ENCODE measurements at regions of chr6 and their contacts with region 1.

Region 1: GRCh38 chr6:32947552-32948465 is 5.1 kb downstream of the HLA-DMA start:
- DNase-seq: peak; percentile 67
- ATAC-seq: peak; percentile 93
- H3K4me3 ChIP-seq: no peak overlapping the region
- H3K27ac ChIP-seq: no peak overlapping the region
- H3K4me1 ChIP-seq: no peaks in the 10 kb centered on the region
- H3K27me3 ChIP-seq: no peaks in the 10 kb centered on the region
- CTCF ChIP-seq: peak; percentile 84

Region 2: GRCh38 chr6:32402812-32403211 is 545.0 kb before region 1 on chr6:
- CTCF ChIA-PET with region 1: no interaction called
- POLR2A ChIA-PET with region 1: no interaction called
- in situ Hi-C with region 1: no loop called
- intact Hi-C with region 1: no loop called
- DNase-seq: no peak
- ATAC-seq: no peak
- H3K4me3 ChIP-seq: no peak overlapping the region
- H3K27ac ChIP-seq: no peak overlapping the region
- H3K4me1 ChIP-seq: peaks cover 4% of the 10 kb centered on the region; the same call in 1 of the 2 replicates
- H3K27me3 ChIP-seq: peaks cover 34% of the 10 kb centered on the region
- CTCF ChIP-seq: no peak

Region 3: GRCh38 chr6:32581315-32582095 is 366.3 kb before region 1 on chr6:
- CTCF ChIA-PET with region 1: no interaction called
- POLR2A ChIA-PET with region 1: no interaction called
- in situ Hi-C with region 1: no loop called
- intact Hi-C with region 1: no loop called
- DNase-seq: no peak
- ATAC-seq: no peak
- H3K4me3 ChIP-seq: no peak overlapping the region
- H3K27ac ChIP-seq: no peak overlapping the region
- H3K4me1 ChIP-seq: no peaks in the 10 kb centered on the region
- H3K27me3 ChIP-seq: peaks cover 3% of the 10 kb centered on the region; the same call in 1 of the 2 replicates
- CTCF ChIP-seq: no peak

Region 4: GRCh38 chr6:32885698-32886286 is 62.0 kb before region 1 on chr6:
- CTCF ChIA-PET with region 1: interaction called, 4 read pairs
- POLR2A ChIA-PET with region 1: interaction called, 4 read pairs
- in situ Hi-C with region 1: no loop called
- intact Hi-C with region 1: loop called (anchors 5 kb)
- DNase-seq: no peak
- ATAC-seq: peak; percentile 80
- H3K4me3 ChIP-seq: no peak overlapping the region
- H3K27ac ChIP-seq: no peak overlapping the region
- H3K4me1 ChIP-seq: no peaks in the 10 kb centered on the region
- H3K27me3 ChIP-seq: no peaks in the 10 kb centered on the region
- CTCF ChIP-seq: peak; percentile 72

Region 5: DNA sequence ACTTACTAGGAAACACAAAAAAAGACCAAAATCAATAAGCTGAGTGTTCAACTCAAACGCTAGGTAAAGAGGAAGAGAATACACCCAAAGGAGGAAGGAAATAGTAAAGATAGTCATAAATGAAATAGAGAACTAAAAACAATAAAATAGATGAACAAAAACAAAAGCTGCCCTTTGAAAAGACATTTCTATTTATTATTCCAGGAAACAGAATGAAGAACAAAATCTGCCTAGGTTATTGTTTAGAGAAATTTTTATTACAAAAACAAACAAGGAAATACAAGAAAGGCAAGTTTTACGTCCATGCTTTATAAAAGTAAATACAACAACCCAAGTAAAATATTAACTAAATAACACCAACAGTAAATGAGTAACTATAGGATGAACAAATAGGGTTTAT is 27.1 kb before region 1 on chr6:
- CTCF ChIA-PET with region 1: no interaction called
- POLR2A ChIA-PET with region 1: interaction called, 13 read pairs
- in situ Hi-C with region 1: no loop called
- intact Hi-C with region 1: no loop called
- DNase-seq: no peak
- ATAC-seq: no peak
- H3K4me3 ChIP-seq: no peak overlapping the region
- H3K27ac ChIP-seq: no peak overlapping the region
- H3K4me1 ChIP-seq: no peaks in the 10 kb centered on the region
- H3K27me3 ChIP-seq: peaks cover 6% of the 10 kb centered on the region; the same call in 1 of the 2 replicates
- CTCF ChIP-seq: no peak

Region 6: GRCh38 chr6:33112148-33112547 is 164.3 kb after region 1 on chr6:
- CTCF ChIA-PET with region 1: no interaction called
- POLR2A ChIA-PET with region 1: no interaction called
- in situ Hi-C with region 1: no loop called
- intact Hi-C with region 1: no loop called
- DNase-seq: no peak
- ATAC-seq: peak; percentile 79
- H3K4me3 ChIP-seq: no peak overlapping the region
- H3K27ac ChIP-seq: no peak overlapping the region
- H3K4me1 ChIP-seq: peaks cover 5% of the 10 kb centered on the region; the same call in 1 of the 2 replicates
- H3K27me3 ChIP-seq: peaks cover 35% of the 10 kb centered on the region
- CTCF ChIP-seq: no peak

Region 7: GRCh38 chr6:33271458-33272274 is 323.9 kb after region 1 on chr6 and contains the starts of genes RPS18 and VPS52:
- CTCF ChIA-PET with region 1: no interaction called
- POLR2A ChIA-PET with region 1: interaction called, 13 read pairs
- in situ Hi-C with region 1: no loop called
- intact Hi-C with region 1: no loop called
- DNase-seq: peak; percentile 93
- ATAC-seq: peak; percentile 93
- H3K4me3 ChIP-seq: peak within 1 kb of the TSS; percentile 97
- H3K27ac ChIP-seq: peak within 1 kb of the TSS; percentile 100
- H3K4me1 ChIP-seq: peaks cover 28% of the 10 kb centered on the region
- H3K27me3 ChIP-seq: no peaks in the 10 kb centered on the region
- CTCF ChIP-seq: no peak
- total RNA-seq, gene RPS18: 1,987 TPM
- total RNA-seq, gene VPS52: 77.7 TPM